ENCODE measurements at regions of chr5 and their contacts with region 1.

Region 1: DNA sequence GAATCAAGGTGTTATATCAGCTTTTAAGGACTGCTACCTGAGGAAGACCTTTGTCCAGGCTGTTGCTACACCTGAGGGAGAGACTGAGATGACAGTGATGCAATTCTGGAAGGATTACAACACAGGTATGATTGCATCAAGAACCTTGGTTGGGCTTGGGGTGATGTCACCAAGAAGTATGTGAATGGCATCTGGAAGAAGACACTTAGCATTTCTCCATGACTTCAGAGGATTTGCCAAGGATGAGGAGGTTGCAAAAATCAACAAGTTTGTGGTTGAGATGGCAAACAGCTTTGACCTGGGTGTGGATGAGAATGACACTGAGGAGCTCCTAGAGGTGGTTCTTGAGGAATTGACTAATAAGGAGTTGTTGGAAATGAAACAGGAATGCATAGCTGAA is 67.9 kb upstream of the PANK3 start:
- DNase-seq: peak; percentile 63 to 75
- H3K4me3 ChIP-seq: no peak overlapping the region
- H3K4me3 Mint-ChIP-seq: no peak overlapping the region
- H3K27ac Mint-ChIP-seq: peak overlapping the region; percentile 74
- H3K4me1 ChIP-seq: peaks cover 12% of the 10 kb centered on the region; the same call in 1 of the 2 replicates
- H3K4me1 Mint-ChIP-seq: peaks cover 9% of the 10 kb centered on the region
- H3K27me3 ChIP-seq: no peaks in the 10 kb centered on the region
- H3K27me3 Mint-ChIP-seq: no peaks in the 10 kb centered on the region
- CTCF ChIP-seq: no peak

Region 2: GRCh38 chr5:168624850-168625357 is 22.2 kb before region 1 on chr5:
- CTCF ChIA-PET with region 1: no interaction called
- POLR2A ChIA-PET with region 1: no interaction called
- intact Hi-C with region 1: loop called (anchors 2 kb)
- DNase-seq: peak in 1 of 2 experiments; percentile 35
- H3K4me3 ChIP-seq: no peak overlapping the region
- H3K4me3 Mint-ChIP-seq: no peak overlapping the region
- H3K27ac Mint-ChIP-seq: no peak overlapping the region
- H3K4me1 ChIP-seq: peaks cover 6% of the 10 kb centered on the region
- H3K4me1 Mint-ChIP-seq: peaks cover 8% of the 10 kb centered on the region
- H3K27me3 ChIP-seq: no peaks in the 10 kb centered on the region
- H3K27me3 Mint-ChIP-seq: no peaks in the 10 kb centered on the region
- CTCF ChIP-seq: no peak